Activated CD8-positive, alpha-beta memory T cell treated with anti-CD3 and anti-CD28 coated beads, Interleukin-2, amount 10 ng/mL, durations not matched to agents 7 days and 5 days (primary cell): ENCODE measurements at regions of chr5 and their contacts with region 1.

Region 1: DNA sequence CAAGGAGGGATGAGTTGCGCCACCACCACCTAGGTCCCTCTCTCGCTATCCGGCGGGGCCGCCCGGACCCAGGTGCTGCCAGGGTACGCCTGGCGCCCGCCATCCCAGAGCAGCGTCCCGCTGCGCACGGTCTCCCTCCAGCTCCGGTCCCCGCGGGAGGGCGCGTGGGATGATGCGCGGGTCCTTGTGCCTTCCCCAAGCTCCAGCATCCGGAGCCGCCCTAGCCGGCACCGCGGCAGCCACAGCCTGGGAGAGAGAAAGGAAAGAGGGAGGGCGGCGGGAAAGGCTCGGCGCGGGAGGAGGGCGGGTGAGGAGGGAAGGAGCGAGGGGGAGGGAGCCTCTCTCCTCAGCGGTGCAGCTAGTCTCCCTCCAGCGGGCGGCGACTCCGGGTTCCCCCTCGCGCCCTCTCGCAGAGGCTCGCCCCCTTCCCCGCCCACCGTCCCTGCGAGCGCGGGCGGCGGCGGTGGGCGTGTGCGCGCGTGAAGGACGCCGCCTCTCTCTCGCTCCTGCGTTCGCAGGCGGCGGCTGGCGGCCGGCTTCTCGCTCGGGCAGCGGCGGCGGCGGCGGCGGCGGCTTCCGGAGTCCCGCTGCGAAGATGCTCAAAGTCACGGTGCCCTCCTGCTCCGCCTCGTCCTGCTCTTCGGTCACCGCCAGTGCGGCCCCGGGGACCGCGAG is at the start of gene CAMK4:
- DNase-seq: peak; percentile 86
- ATAC-seq: peak; percentile 85
- H3K4me3 Mint-ChIP-seq: peak within 1 kb of the TSS; percentile 96
- H3K27ac Mint-ChIP-seq: peak within 1 kb of the TSS; percentile 90
- H3K4me1 Mint-ChIP-seq: peaks cover 32% of the 10 kb centered on the region
- H3K27me3 Mint-ChIP-seq: no peaks in the 10 kb centered on the region
- total RNA-seq, gene CAMK4: 77.4 to 91.1 TPM

Region 2: DNA sequence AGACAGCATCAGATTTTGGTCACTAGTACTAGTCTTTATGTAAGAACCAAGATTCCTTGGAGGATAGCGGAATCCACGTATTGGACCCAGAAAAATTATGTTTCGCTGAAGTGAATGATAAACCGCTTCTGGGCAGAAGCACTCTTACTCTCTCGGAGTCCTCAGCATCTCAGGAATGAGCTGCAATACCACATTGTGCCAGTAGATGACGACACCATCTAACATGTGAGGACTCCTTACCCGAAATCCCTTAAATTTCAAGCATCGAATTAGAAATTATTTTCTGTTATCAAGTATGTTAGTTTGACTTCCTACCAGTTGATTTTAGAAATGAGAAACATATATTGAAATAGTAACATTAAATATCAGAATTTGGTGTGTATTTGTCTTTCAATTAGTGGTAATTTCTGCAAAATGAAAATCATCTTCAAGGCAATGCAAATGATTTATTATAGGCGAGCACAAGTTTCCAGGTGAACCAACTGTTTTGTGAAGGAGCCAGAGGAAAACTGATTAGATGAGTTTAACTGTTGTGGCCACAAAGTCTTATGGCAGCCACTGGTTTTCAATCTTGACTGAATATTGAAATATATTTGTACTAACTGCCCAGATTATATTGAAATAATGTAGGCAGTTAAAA is 65.8 kb before region 1 on chr5:
- CTCF ChIA-PET with region 1: interaction called, 12 read pairs
- DNase-seq: peak; percentile 85
- ATAC-seq: peak; percentile 75
- H3K4me3 Mint-ChIP-seq: no peak overlapping the region
- H3K27ac Mint-ChIP-seq: no peak overlapping the region
- H3K4me1 Mint-ChIP-seq: peaks cover 4% of the 10 kb centered on the region
- H3K27me3 Mint-ChIP-seq: peaks cover 3% of the 10 kb centered on the region

Region 3: GRCh38 chr5:111211341-111211740 is 12.7 kb before region 1 on chr5:
- CTCF ChIA-PET with region 1: interaction called, 18 read pairs
- DNase-seq: no peak
- ATAC-seq: peak; percentile 36
- H3K4me3 Mint-ChIP-seq: no peak overlapping the region
- H3K27ac Mint-ChIP-seq: peak overlapping the region; percentile 11
- H3K4me1 Mint-ChIP-seq: peaks cover 6% of the 10 kb centered on the region
- H3K27me3 Mint-ChIP-seq: no peaks in the 10 kb centered on the region

Region 4: GRCh38 chr5:111234125-111234524 is 10.1 kb after region 1 on chr5:
- CTCF ChIA-PET with region 1: interaction called, 65 read pairs
- DNase-seq: no peak
- ATAC-seq: peak; percentile 14
- H3K4me3 Mint-ChIP-seq: peak overlapping the region; percentile 58
- H3K27ac Mint-ChIP-seq: peak overlapping the region; percentile 96
- H3K4me1 Mint-ChIP-seq: peaks cover 89% of the 10 kb centered on the region
- H3K27me3 Mint-ChIP-seq: no peaks in the 10 kb centered on the region

Region 5: GRCh38 chr5:111248571-111248970 is 24.5 kb after region 1 on chr5:
- CTCF ChIA-PET with region 1: interaction called, 18 read pairs
- DNase-seq: no peak
- ATAC-seq: no peak
- H3K4me3 Mint-ChIP-seq: no peak overlapping the region
- H3K27ac Mint-ChIP-seq: peak overlapping the region; percentile 31
- H3K4me1 Mint-ChIP-seq: peaks cover 66% of the 10 kb centered on the region
- H3K27me3 Mint-ChIP-seq: no peaks in the 10 kb centered on the region

Region 6: DNA sequence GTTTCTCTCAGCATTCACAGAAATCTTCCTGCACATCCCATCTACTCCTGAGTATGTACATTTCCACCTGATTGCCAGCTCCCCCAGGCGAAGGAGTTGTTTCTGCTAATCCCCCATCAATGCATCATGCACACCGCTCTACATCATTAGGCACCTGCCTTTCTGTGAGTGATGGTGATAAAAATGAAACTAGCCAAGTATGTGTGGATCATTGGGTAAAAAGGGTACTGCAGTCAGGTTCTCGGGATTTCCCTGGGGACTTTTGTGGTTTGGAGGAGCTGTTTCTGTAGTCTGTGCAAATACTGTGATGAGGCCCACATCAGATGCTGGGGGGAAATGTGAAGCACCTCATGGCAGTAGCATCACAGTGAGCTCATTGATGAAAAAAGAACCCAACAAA is 30.6 kb after region 1 on chr5:
- CTCF ChIA-PET with region 1: interaction called, 16 read pairs
- DNase-seq: peak; percentile 78
- ATAC-seq: peak; percentile 82
- H3K4me3 Mint-ChIP-seq: peak overlapping the region; percentile 44
- H3K27ac Mint-ChIP-seq: peak overlapping the region; percentile 85
- H3K4me1 Mint-ChIP-seq: peaks cover 68% of the 10 kb centered on the region
- H3K27me3 Mint-ChIP-seq: no peaks in the 10 kb centered on the region

Region 7: GRCh38 chr5:111278845-111279504 is 54.9 kb after region 1 on chr5:
- CTCF ChIA-PET with region 1: interaction called, 35 read pairs
- DNase-seq: peak; percentile 88
- ATAC-seq: peak; percentile 99
- H3K4me3 Mint-ChIP-seq: no peak overlapping the region
- H3K27ac Mint-ChIP-seq: peak overlapping the region; percentile 52
- H3K4me1 Mint-ChIP-seq: peaks cover 20% of the 10 kb centered on the region
- H3K27me3 Mint-ChIP-seq: no peaks in the 10 kb centered on the region

Region 8: GRCh38 chr5:111299067-111299481 is 75.0 kb after region 1 on chr5:
- CTCF ChIA-PET with region 1: no interaction called
- DNase-seq: no peak
- ATAC-seq: no peak
- H3K4me3 Mint-ChIP-seq: no peak overlapping the region
- H3K27ac Mint-ChIP-seq: no peak overlapping the region
- H3K4me1 Mint-ChIP-seq: peaks cover 13% of the 10 kb centered on the region
- H3K27me3 Mint-ChIP-seq: no peaks in the 10 kb centered on the region

Region 9: DNA sequence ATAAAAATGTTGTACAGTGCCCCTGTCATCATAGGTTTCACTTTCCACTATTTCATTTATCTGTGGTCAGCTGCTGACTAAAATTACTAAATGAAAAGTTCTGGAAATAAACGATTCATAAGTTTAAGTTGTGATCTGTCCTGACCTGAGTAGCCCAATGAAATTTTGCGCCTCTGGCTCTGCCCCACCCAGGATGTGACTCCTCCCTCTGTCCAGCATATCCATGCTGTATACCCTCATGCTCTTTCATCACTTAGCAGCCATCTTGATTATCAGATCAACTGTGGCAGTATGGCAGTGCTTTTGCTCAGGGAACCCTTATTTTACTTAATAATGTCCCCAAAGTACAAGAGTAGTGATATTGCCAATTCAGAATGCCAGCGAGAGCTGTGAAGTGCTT is 191.0 kb after region 1 on chr5:
- CTCF ChIA-PET with region 1: no interaction called
- DNase-seq: no peak
- ATAC-seq: no peak
- H3K4me3 Mint-ChIP-seq: no peak overlapping the region
- H3K27ac Mint-ChIP-seq: no peak overlapping the region
- H3K4me1 Mint-ChIP-seq: peaks cover 4% of the 10 kb centered on the region
- H3K27me3 Mint-ChIP-seq: no peaks in the 10 kb centered on the region

Region 10: GRCh38 chr5:111618623-111619271 is 394.7 kb after region 1 on chr5:
- CTCF ChIA-PET with region 1: no interaction called
- DNase-seq: no peak
- ATAC-seq: no peak
- H3K4me3 Mint-ChIP-seq: no peak overlapping the region
- H3K27ac Mint-ChIP-seq: no peak overlapping the region
- H3K4me1 Mint-ChIP-seq: no peaks in the 10 kb centered on the region
- H3K27me3 Mint-ChIP-seq: peaks cover 2% of the 10 kb centered on the region